ENCODE measurements at regions of chr15 and their contacts with region 1.

Region 1: DNA sequence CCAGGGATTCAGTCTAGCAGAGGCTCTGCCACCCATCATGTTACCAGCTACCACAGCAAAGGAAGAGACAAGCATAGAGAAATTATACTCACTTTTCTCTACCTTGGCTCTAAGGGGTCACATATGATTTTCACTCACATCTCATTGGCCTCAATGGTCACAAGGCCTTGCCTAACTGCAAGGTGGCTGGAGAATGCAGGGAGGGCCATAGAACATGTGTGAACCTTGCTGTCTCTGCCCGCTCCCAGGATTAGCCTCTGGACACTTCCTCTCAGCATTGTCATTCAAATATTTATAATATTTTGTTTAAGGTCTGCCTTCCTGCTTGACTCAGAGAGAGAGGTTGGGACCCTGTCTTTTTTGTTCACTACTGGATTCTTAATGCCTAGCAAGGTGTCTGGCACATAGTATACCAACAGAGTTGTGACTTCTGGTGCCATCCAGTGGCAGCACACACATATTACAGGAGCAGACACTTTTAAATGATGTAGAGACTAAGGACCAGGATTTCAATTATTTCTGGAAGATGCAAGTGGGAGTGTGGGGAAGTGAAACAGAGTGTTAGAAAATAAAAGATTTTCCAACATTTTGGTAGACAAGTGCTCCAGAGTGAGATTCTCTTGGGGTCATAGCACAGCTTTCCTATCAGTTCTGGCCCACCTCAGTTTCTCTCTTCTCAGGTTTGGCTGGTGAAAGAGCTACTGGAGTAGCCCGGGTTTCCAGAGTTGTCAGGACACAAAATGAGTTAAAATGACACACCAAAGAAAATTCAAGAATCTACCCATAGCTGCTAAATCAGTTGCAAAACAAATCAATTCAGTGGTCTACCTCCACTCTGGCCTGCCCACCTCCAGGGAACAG is 119.0 kb upstream of the RASGRP1 start:
- DNase-seq: peak; percentile 45 to 88 (median 70)
- ATAC-seq: peak; percentile 63
- H3K4me3 ChIP-seq: no peak overlapping the region
- H3K4me3 Mint-ChIP-seq: peak overlapping the region; percentile 2
- H3K27ac ChIP-seq: peak overlapping the region in 1 of 2 donors; percentile 39
- H3K27ac Mint-ChIP-seq: peak overlapping the region; percentile 89
- H3K4me1 ChIP-seq: peaks cover 60% of the 10 kb centered on the region
- H3K4me1 Mint-ChIP-seq: peaks cover 84% of the 10 kb centered on the region
- H3K27me3 ChIP-seq: no peaks in the 10 kb centered on the region
- H3K27me3 Mint-ChIP-seq: no peaks in the 10 kb centered on the region
- CTCF ChIP-seq: peak; percentile 96

Region 2: GRCh38 chr15:38610748-38611147 is 72.9 kb before region 1 on chr15:
- CTCF ChIA-PET with region 1: interaction called, 5 read pairs
- POLR2A ChIA-PET with region 1: no interaction called
- intact Hi-C with region 1: loop called in 1 of 2 experiments (anchors 1 kb)
- DNase-seq: peak in 5 of 14 experiments; percentile 6 to 59 (median 39)
- ATAC-seq: peak; percentile 89
- H3K4me3 ChIP-seq: no peak overlapping the region
- H3K4me3 Mint-ChIP-seq: peak overlapping the region; percentile 1
- H3K27ac ChIP-seq: peak overlapping the region in 1 of 2 donors; percentile 72
- H3K27ac Mint-ChIP-seq: peak overlapping the region; percentile 70
- H3K4me1 ChIP-seq: peaks cover 37% of the 10 kb centered on the region
- H3K4me1 Mint-ChIP-seq: peaks cover 53% of the 10 kb centered on the region
- H3K27me3 ChIP-seq: no peaks in the 10 kb centered on the region
- H3K27me3 Mint-ChIP-seq: no peaks in the 10 kb centered on the region
- CTCF ChIP-seq: no peak

Region 3: GRCh38 chr15:38631126-38632075 is 52.2 kb before region 1 on chr15:
- CTCF ChIA-PET with region 1: no interaction called
- POLR2A ChIA-PET with region 1: interaction called, 6 read pairs
- intact Hi-C with region 1: loop called in 1 of 2 experiments (anchors 10 kb)
- DNase-seq: peak in 2 of 14 experiments; percentile 29 to 38
- ATAC-seq: peak; percentile 21
- H3K4me3 ChIP-seq: no peak overlapping the region
- H3K4me3 Mint-ChIP-seq: no peak overlapping the region
- H3K27ac ChIP-seq: peak overlapping the region in 1 of 2 donors; percentile 13
- H3K27ac Mint-ChIP-seq: peak overlapping the region; percentile 62
- H3K4me1 ChIP-seq: peaks cover 26% of the 10 kb centered on the region
- H3K4me1 Mint-ChIP-seq: peaks cover 25% of the 10 kb centered on the region
- H3K27me3 ChIP-seq: no peaks in the 10 kb centered on the region
- H3K27me3 Mint-ChIP-seq: no peaks in the 10 kb centered on the region
- CTCF ChIP-seq: no peak

Region 4: GRCh38 chr15:38660738-38661137 is 22.9 kb before region 1 on chr15:
- CTCF ChIA-PET with region 1: interaction called, 12 read pairs
- POLR2A ChIA-PET with region 1: interaction called, 379 read pairs
- intact Hi-C with region 1: no loop called
- DNase-seq: peak in 7 of 14 experiments; percentile 15 to 70 (median 49)
- ATAC-seq: peak; percentile 58
- H3K4me3 ChIP-seq: no peak overlapping the region
- H3K4me3 Mint-ChIP-seq: peak overlapping the region; percentile 21
- H3K27ac ChIP-seq: no peak overlapping the region
- H3K27ac Mint-ChIP-seq: peak overlapping the region; percentile 78
- H3K4me1 ChIP-seq: peaks cover 42% of the 10 kb centered on the region
- H3K4me1 Mint-ChIP-seq: peaks cover 77% of the 10 kb centered on the region
- H3K27me3 ChIP-seq: no peaks in the 10 kb centered on the region
- H3K27me3 Mint-ChIP-seq: no peaks in the 10 kb centered on the region
- CTCF ChIP-seq: no peak

Region 5: DNA sequence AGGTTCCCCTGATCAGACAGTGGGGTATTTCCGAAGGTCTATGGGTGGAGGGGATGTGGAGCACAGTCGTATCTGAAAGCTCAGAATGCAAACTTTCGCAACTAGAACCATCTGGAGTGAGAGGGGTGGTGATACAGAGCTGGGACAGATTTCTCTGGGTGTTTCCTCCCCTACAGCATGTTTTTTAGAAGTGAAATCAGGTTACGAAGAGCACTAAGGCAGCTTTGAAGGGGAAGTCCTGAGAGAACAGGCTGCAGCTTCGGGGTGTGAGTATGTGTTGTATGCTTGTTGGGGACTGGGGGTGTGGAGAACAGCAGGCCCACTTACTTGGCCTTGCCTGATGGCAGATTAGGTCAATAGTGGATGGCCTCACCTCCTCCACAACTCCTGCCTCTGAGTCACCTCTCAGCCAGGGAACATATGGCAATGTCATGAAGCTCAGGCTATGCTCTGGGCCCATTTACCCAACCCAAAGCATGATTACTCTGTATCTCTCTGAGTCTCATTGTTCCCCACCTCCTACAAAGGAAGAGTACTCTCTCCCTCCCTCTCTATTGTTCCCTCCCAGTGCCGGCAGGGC is 11.8 kb before region 1 on chr15:
- CTCF ChIA-PET with region 1: interaction called, 15 read pairs
- POLR2A ChIA-PET with region 1: interaction called, 85 read pairs
- intact Hi-C with region 1: loop called in 1 of 2 experiments (anchors 1 kb)
- DNase-seq: peak in 11 of 14 experiments; percentile 23 to 91 (median 44)
- ATAC-seq: peak; percentile 51
- H3K4me3 ChIP-seq: no peak overlapping the region
- H3K4me3 Mint-ChIP-seq: peak overlapping the region; percentile 61
- H3K27ac ChIP-seq: peak overlapping the region; percentile 85 to 94
- H3K27ac Mint-ChIP-seq: peak overlapping the region; percentile 95
- H3K4me1 ChIP-seq: peaks cover 80% of the 10 kb centered on the region
- H3K4me1 Mint-ChIP-seq: peaks cover 68% of the 10 kb centered on the region
- H3K27me3 ChIP-seq: no peaks in the 10 kb centered on the region
- H3K27me3 Mint-ChIP-seq: no peaks in the 10 kb centered on the region
- CTCF ChIP-seq: no peak